Colonic mucosa (tissue), 4 donors: ENCODE measurements at regions of chr4 and their contacts with region 1.

Region 1: DNA sequence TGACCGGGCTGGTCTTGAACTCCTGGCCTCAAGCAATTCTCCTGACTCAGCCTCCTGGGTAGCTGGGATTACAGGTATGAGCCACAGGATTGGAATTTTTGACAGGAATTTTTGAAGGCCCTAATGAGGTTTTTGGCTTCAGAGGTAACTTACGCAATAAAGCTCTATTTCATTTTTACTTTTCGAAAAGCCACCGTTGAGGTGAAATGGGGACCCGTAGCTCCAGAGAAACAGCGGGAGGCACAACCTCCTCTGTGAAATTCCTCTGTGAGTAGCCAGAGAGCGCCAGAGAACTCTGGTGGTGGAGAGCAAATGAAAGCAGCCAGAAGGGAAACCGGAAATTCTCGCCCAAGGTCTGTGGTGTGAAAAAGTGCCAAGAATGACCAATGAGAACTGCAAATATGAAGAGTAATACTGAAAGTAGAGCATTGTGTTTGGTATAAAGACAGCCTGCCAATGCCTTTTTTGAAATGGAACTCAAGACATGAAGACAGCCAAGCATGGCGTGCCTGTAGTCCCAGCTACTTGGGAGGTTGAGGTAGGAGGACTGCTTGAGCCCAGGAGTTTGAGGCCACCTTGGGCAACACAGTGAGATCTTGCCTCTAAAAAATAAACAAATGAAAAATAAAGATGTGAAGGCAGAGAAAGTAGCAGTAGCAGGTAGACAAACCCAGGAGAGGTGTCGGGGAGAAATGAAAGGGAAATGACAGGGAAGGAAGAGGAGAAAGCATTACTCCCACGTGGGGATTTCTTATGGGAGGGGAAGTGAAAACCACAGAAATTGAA is 33.0 kb upstream of the TMEM131L start:
- DNase-seq: peak; percentile 75
- H3K4me3 ChIP-seq: no peak overlapping the region
- H3K27ac ChIP-seq: no peak overlapping the region
- H3K4me1 ChIP-seq: no peaks in the 10 kb centered on the region
- H3K27me3 ChIP-seq: no peaks in the 10 kb centered on the region
- CTCF ChIP-seq: peak; percentile 77

Region 2: DNA sequence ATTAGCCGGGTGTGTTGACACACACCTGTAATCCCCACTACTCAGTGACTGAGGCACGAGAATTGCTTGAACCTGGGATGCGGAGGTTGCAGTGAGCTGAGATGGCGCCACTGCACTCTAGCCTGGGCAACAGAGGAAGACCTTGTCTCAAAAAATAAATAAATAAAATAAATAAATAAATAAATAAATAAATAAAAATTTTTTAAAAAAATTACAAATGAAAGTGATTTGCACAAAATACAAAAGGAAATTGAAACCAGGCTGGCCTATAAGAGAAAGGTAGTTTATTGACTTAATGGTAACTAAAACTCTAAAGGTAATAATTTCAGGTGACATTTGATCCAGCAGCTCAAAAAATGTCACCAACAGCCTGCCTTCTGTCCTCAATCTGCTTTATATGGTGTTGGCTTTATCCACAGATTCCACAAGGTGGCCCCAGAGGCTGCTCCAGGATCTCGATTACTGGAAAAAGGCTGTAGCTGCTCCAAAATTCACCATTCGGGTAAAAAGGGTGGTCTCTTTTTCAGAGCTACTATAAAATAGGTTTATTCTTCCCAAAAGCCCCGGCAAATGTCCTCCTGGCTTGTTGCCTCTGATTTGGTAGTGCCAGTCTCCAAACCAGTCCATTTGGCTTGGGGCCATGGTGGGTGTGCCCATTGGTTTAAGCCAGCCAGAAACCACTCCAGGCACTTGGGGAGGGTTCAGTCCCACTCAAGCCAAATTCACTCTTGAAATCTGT is 290.3 kb before region 1 on chr4:
- intact Hi-C with region 1: loop called (anchors 10 kb)
- DNase-seq: peak; percentile 92
- H3K4me3 ChIP-seq: no peak overlapping the region
- H3K27ac ChIP-seq: peak overlapping the region; percentile 35
- H3K4me1 ChIP-seq: peaks cover 5% of the 10 kb centered on the region
- H3K27me3 ChIP-seq: no peaks in the 10 kb centered on the region
- CTCF ChIP-seq: peak; percentile 91

Region 3: DNA sequence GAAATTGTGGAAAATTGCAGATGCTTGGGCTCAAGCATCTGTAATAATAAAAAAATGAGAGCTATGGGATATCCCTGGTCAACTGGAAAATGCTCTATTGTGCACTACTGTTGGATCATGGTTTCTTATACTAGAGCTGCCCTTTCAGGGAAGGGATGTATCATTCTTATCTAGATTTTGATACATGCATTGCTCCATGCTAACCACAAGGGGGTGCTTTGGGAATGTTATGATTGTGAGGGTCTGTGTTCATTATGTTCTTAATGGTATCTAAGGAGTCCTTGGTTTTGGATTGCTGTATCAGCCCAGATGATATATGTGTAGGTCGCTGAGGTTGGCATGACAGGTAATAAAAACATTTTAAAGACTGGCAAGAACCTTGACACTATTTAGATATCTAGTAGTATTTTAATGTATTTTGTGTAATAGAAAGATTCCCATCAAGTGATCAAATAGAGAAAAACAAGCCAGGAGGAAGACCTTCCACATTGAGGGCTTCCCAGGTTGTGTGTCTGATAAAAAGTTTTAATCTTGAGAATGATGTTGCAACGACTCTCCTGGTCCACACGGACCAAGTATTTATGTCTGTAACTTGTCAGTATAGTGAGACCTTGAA is 201.7 kb after region 1 on chr4:
- intact Hi-C with region 1: no loop called
- DNase-seq: no peak
- H3K4me3 ChIP-seq: no peak overlapping the region
- H3K27ac ChIP-seq: no peak overlapping the region
- H3K4me1 ChIP-seq: no peaks in the 10 kb centered on the region
- H3K27me3 ChIP-seq: no peaks in the 10 kb centered on the region
- CTCF ChIP-seq: peak; percentile 47